ENCODE measurements at regions of chr11 and their contacts with region 1.

Region 1: GRCh38 chr11:103241574-103241973 is 132.3 kb downstream of the DYNC2H1 start:
- DNase-seq: no peak
- H3K4me3 ChIP-seq: no peak overlapping the region
- H3K27ac ChIP-seq: no peak overlapping the region
- H3K4me1 ChIP-seq: no peaks in the 10 kb centered on the region
- H3K27me3 ChIP-seq: no peaks in the 10 kb centered on the region
- CTCF ChIP-seq: no peak
- EP300 ChIP-seq: no peak
- POLR2A ChIP-seq: no peak

Region 2: DNA sequence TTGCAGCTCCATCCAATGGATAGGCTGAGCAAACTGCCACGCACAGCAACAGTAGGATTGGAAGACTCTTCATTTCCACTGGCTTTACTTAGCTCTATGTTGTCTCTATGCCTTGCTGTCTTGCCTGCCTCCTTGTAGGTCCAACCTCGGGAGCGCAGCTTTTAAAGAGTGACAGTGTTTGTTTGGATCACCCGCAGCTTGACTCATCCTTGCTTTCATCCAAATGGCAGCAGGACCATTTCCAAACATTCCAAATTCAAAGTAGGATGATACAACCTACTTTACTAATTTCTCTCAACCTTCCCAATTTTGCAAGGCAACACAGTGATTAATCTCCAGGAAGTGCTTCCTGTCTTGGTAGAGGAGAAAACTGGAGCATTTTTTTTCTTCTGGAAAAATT is 398.1 kb before region 1 on chr11 and contains the start of gene MMP3:
- in situ Hi-C with region 1: no loop called
- intact Hi-C with region 1: no loop called
- DNase-seq: no peak
- H3K4me3 ChIP-seq: no peak within 1 kb of the TSS
- H3K27ac ChIP-seq: no peak within 1 kb of the TSS
- H3K4me1 ChIP-seq: no peaks in the 10 kb centered on the region
- H3K27me3 ChIP-seq: no peaks in the 10 kb centered on the region
- CTCF ChIP-seq: no peak
- EP300 ChIP-seq: no peak
- POLR2A ChIP-seq: no peak
- total RNA-seq, gene MMP3: 0.48 to 4.8 (median 1.1) TPM

Region 3: GRCh38 chr11:103222806-103223205 is 18.8 kb before region 1 on chr11:
- in situ Hi-C with region 1: no loop called
- intact Hi-C with region 1: loop called (anchors 1 kb)
- DNase-seq: no peak
- H3K4me3 ChIP-seq: no peak overlapping the region
- H3K27ac ChIP-seq: no peak overlapping the region
- H3K4me1 ChIP-seq: no peaks in the 10 kb centered on the region
- H3K27me3 ChIP-seq: no peaks in the 10 kb centered on the region
- CTCF ChIP-seq: no peak
- EP300 ChIP-seq: no peak
- POLR2A ChIP-seq: no peak

Measured in transverse colon (tissue), 4 donors.